ENCODE measurements at regions of chr10 and their contacts with region 1.

Region 1: GRCh38 chr10:73886085-73886529 is 11.8 kb upstream of the CAMK2G start:
- DNase-seq: peak; percentile 84
- H3K4me3 ChIP-seq: no peak overlapping the region
- H3K27ac ChIP-seq: no peak overlapping the region
- H3K4me1 ChIP-seq: no peaks in the 10 kb centered on the region
- CTCF ChIP-seq: peak; percentile 97

Region 2: GRCh38 chr10:72186258-72186981 is 1699.7 kb before region 1 on chr10:
- CTCF ChIA-PET with region 1: no interaction called
- POLR2A ChIA-PET with region 1: no interaction called
- intact Hi-C with region 1: no loop called
- DNase-seq: no peak
- H3K4me3 ChIP-seq: no peak overlapping the region
- H3K27ac ChIP-seq: no peak overlapping the region
- H3K4me1 ChIP-seq: no peaks in the 10 kb centered on the region
- CTCF ChIP-seq: no peak

Region 3: GRCh38 chr10:72889391-72889831 is 996.7 kb before region 1 on chr10:
- CTCF ChIA-PET with region 1: no interaction called
- POLR2A ChIA-PET with region 1: no interaction called
- intact Hi-C with region 1: no loop called
- DNase-seq: no peak
- H3K4me3 ChIP-seq: no peak overlapping the region
- H3K27ac ChIP-seq: no peak overlapping the region
- H3K4me1 ChIP-seq: no peaks in the 10 kb centered on the region
- CTCF ChIP-seq: no peak

Region 4: GRCh38 chr10:73940634-73941221 is 54.6 kb after region 1 on chr10:
- CTCF ChIA-PET with region 1: interaction called, 7 read pairs
- POLR2A ChIA-PET with region 1: interaction called, 5 read pairs
- intact Hi-C with region 1: loop called (anchors 1 kb)
- DNase-seq: peak; percentile 62
- H3K4me3 ChIP-seq: no peak overlapping the region
- H3K27ac ChIP-seq: no peak overlapping the region
- H3K4me1 ChIP-seq: no peaks in the 10 kb centered on the region
- CTCF ChIP-seq: peak; percentile 91

Region 5: GRCh38 chr10:74035303-74035702 is 149.2 kb after region 1 on chr10:
- CTCF ChIA-PET with region 1: interaction called, 3 read pairs
- POLR2A ChIA-PET with region 1: interaction called, 3 read pairs
- intact Hi-C with region 1: loop called (anchors 1 kb)
- DNase-seq: peak; percentile 38
- H3K4me3 ChIP-seq: no peak overlapping the region
- H3K27ac ChIP-seq: no peak overlapping the region
- H3K4me1 ChIP-seq: peaks cover 10% of the 10 kb centered on the region
- CTCF ChIP-seq: peak; percentile 79

Region 6: DNA sequence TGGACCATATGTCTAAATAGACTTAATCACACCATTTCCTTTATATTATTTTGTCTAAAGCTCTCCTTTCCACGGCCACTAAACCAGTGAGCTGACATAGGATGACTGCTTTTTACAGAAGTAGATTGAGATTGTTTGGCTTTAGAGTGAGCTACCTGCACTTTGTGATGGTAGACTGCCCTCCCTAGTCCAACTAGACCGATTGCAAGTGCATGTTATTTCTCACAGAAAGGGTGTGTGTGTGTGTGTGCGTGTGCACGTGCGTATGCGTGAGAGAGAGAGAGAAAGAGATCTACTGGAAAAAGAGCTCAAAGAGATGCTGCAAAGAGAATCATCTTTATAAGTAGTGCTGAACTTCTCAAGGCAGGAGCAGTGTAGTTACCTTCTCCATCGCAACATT is 172.6 kb after region 1 on chr10:
- CTCF ChIA-PET with region 1: interaction called, 5 read pairs
- POLR2A ChIA-PET with region 1: no interaction called
- intact Hi-C with region 1: loop called (anchors 1 kb)
- DNase-seq: peak; percentile 73
- H3K4me3 ChIP-seq: no peak overlapping the region
- H3K27ac ChIP-seq: no peak overlapping the region
- H3K4me1 ChIP-seq: peaks cover 14% of the 10 kb centered on the region
- CTCF ChIP-seq: peak; percentile 73

Region 7: DNA sequence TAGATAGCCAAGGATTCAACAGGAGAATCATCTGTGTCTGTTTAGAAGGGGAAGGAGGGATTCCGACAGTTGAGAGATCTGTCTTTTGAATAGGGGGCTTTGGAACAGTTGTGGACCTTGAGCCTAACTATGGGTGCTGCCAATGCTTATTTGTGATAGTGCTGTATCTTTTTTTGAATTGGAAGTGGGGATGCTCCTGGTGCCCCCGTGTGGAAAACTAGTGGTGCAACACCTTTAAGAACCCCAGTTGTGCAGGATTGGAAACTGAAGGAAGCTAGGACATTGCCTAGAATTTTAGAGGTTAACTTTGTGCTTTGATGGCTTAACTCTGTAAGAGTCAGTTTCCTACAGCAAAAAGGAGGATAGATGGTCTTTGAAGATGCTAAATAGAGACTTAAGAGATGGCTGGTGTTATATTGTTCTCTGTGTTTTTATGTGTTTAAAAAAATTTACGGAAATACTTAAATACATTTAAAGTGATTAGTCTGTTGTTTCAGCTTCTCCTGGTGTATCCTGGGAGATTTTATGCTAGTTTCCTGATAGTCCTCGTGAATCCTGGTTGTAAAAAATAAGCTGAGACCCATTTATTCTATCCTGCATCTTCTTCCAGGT is 195.2 kb after region 1 on chr10:
- CTCF ChIA-PET with region 1: interaction called, 5 read pairs
- POLR2A ChIA-PET with region 1: interaction called, 3 read pairs
- intact Hi-C with region 1: loop called (anchors 1 kb)
- DNase-seq: peak; percentile 68
- H3K4me3 ChIP-seq: no peak overlapping the region
- H3K27ac ChIP-seq: no peak overlapping the region
- H3K4me1 ChIP-seq: peaks cover 44% of the 10 kb centered on the region
- CTCF ChIP-seq: peak; percentile 90

Region 8: GRCh38 chr10:74103560-74104248 is 217.6 kb after region 1 on chr10:
- CTCF ChIA-PET with region 1: interaction called, 4 read pairs
- POLR2A ChIA-PET with region 1: interaction called, 4 read pairs
- intact Hi-C with region 1: loop called (anchors 1 kb)
- DNase-seq: peak; percentile 58
- H3K4me3 ChIP-seq: no peak overlapping the region
- H3K27ac ChIP-seq: no peak overlapping the region
- H3K4me1 ChIP-seq: no peaks in the 10 kb centered on the region
- CTCF ChIP-seq: peak; percentile 86